H1 (cell line): ENCODE measurements at regions of chr4 and their contacts with region 1.

Region 1: GRCh38 chr4:6574747-6575502 is at the start of gene MAN2B2:
- DNase-seq: peak; percentile 39 to 95
- H3K4me3 ChIP-seq: peak within 1 kb of the TSS; percentile 57 to 82 (median 78)
- H3K27ac ChIP-seq: peak within 1 kb of the TSS; percentile 34; the same call in 1 of the 2 replicates
- H3K4me1 ChIP-seq: peaks cover 0 to 6% (median 4%) of the 10 kb centered on the region in 4 experiments; a peak in 4 of 7 replicates
- H3K27me3 ChIP-seq: peaks cover 3 to 13% (median 10%) of the 10 kb centered on the region in 4 experiments
- CTCF ChIP-seq: 0 out of 4 replicates have a peak, but pooled peaks of 1 of the 3 experiments have one; percentile 9
- EP300 ChIP-seq: no peak
- POLR2A ChIP-seq: peak in 1 of 2 experiments; percentile 76; a peak in 2 of 3 replicates
- RAD21 ChIP-seq: no peak
- total RNA-seq, gene MAN2B2: 4.0 and 4.1 TPM in 2 replicates

Region 2: DNA sequence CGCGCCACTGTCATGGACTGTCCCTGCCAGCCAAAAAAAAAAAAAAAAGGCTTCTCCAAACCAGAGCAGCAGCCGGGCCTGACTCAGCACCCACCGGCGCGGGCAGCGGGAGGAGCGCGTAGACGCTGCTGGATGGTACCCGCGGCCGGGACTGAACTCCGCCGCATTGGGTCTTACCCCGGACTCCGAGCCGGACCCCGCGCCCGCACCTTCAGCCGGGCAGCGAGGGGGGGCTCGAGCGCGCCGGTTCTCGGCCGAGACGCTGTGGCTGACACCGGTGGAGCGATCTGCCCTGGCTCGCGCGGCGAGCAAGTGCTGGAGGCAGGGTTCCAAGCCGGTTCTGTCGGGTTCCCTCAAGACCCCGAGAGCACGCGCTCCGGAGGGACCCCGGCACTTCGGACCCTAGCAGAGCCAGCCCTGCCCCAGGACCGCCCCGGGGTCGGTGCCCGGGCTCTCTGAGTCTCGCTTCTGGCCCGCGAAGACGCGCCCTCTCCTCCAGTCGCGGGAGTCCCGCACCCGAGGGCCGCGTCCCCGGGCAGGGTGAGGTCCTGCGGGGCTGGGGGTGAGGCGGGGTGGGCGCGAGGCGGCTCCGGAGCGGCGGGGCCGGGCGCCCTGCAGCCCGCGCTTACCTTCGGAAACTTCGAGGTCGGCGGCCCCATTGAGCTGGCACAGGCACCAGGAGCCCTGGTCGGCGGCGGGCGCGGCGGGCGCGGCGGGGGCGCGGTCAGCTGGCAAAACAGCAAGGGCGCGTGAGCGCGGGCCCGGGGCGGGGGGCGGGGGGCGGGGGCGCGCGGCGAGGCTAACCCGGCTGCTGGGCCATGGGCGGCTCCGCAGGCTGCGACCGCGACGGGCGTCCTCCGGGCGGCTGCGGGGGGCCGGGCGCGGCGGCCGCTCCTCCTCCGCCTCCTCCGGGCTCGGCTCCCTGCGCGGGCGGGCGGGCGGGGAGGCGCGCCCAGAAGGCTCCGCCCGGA is 11.7 kb before region 1 on chr4:
- CTCF ChIA-PET with region 1: interaction called, 16 read pairs
- POLR2A ChIA-PET with region 1: interaction called, 4 read pairs
- DNase-seq: peak in 1 of 2 experiments; percentile 67
- H3K4me3 ChIP-seq: peak overlapping the region; percentile 28 to 64 (median 42)
- H3K27ac ChIP-seq: no peak overlapping the region
- H3K4me1 ChIP-seq: peaks cover 0 to 5% (median 2%) of the 10 kb centered on the region in 4 experiments; a peak in 3 of 7 replicates
- H3K27me3 ChIP-seq: peaks cover 38 to 79% (median 62%) of the 10 kb centered on the region in 4 experiments
- CTCF ChIP-seq: no peak
- EP300 ChIP-seq: no peak
- POLR2A ChIP-seq: no peak
- RAD21 ChIP-seq: no peak